Activated CD8-positive, alpha-beta T cell treated with anti-CD3 and anti-CD28 coated beads for 36 hours (primary cell): ENCODE measurements at regions of chr17 and their contacts with region 1.

Region 1: DNA sequence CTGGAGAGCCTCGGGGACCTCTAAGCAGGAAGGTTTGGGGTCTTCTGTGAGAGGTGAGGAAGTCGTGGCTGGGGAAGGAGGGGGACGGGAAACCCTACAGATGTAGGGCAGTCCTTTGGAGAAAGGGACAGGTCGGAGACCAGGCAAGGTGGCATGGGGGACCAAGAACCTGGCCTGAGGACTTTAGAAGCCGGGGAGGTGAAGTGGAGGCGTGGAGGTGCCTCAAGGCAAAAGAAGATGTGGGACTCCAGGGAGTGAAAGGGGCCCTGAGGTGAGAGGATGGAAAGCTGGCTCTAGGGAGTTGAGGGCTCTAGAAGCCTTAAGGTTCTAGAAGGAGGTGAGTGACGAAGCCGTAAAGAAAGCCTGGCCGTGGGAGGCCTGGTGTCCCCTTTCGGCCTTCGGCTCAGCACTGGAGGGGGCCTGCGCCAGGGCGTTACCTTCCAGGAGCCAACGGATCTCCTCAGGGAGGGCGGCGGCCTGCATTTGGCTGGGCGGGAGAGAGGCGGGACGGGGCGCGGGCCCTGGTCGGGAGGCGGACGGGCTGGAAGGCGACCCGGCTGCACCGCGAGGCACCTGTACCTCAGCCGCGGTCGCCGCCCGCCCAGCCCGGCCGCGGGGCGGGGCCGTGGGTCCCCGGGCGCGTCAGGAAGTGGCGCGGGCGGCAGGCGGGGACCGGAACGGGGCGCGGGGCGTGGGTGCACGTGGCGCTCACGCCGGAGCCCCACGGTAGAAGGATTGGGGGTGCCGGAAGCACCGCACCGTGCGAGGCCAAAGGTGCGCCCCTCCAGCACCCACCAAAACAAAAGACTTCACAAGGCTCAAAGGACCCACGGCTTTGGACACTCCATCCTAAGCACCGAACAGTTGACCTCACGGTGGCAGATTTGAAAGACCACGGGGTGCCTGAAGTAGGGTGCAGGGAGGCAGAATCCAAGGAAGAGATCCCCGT is at the start of gene SKAP1:
- DNase-seq: peak; percentile 65
- ATAC-seq: peak; percentile 62
- H3K4me3 Mint-ChIP-seq: peak within 1 kb of the TSS; percentile 93
- H3K27ac Mint-ChIP-seq: peak within 1 kb of the TSS; percentile 94
- H3K4me1 Mint-ChIP-seq: peaks cover 53% of the 10 kb centered on the region
- H3K27me3 Mint-ChIP-seq: no peaks in the 10 kb centered on the region
- CTCF ChIP-seq: no peak
- total RNA-seq, gene SKAP1: 73.9 to 81.3 TPM

Region 2: GRCh38 chr17:48413613-48414405 is 16.1 kb before region 1 on chr17:
- CTCF ChIA-PET with region 1: interaction called, 7 read pairs
- POLR2A ChIA-PET with region 1: interaction called, 10 read pairs
- intact Hi-C with region 1: no loop called
- DNase-seq: no peak
- ATAC-seq: peak; percentile 49
- H3K4me3 Mint-ChIP-seq: peak overlapping the region; percentile 16
- H3K27ac Mint-ChIP-seq: peak overlapping the region; percentile 91
- H3K4me1 Mint-ChIP-seq: peaks cover 82% of the 10 kb centered on the region
- H3K27me3 Mint-ChIP-seq: no peaks in the 10 kb centered on the region
- CTCF ChIP-seq: no peak

Region 3: GRCh38 chr17:48441231-48441711 is 11.4 kb after region 1 on chr17:
- CTCF ChIA-PET with region 1: interaction called, 7 read pairs
- POLR2A ChIA-PET with region 1: interaction called, 44 read pairs
- intact Hi-C with region 1: no loop called
- DNase-seq: peak; percentile 60
- ATAC-seq: peak; percentile 63
- H3K4me3 Mint-ChIP-seq: peak overlapping the region; percentile 50
- H3K27ac Mint-ChIP-seq: peak overlapping the region; percentile 97
- H3K4me1 Mint-ChIP-seq: peaks cover 90% of the 10 kb centered on the region
- H3K27me3 Mint-ChIP-seq: no peaks in the 10 kb centered on the region
- CTCF ChIP-seq: no peak